Mammary epithelial cell (primary cell): ENCODE measurements at regions of chr6 and their contacts with region 1.

Region 1: GRCh38 chr6:108541838-108542759 is 18.6 kb upstream of the FOXO3 start:
- DNase-seq: peak; percentile 67
- H3K4me3 ChIP-seq: no peak overlapping the region
- H3K27ac ChIP-seq: no peak overlapping the region
- H3K4me1 ChIP-seq: no peaks in the 10 kb centered on the region
- H3K27me3 ChIP-seq: no peaks in the 10 kb centered on the region
- CTCF ChIP-seq: peak; percentile 76 to 85

Region 2: DNA sequence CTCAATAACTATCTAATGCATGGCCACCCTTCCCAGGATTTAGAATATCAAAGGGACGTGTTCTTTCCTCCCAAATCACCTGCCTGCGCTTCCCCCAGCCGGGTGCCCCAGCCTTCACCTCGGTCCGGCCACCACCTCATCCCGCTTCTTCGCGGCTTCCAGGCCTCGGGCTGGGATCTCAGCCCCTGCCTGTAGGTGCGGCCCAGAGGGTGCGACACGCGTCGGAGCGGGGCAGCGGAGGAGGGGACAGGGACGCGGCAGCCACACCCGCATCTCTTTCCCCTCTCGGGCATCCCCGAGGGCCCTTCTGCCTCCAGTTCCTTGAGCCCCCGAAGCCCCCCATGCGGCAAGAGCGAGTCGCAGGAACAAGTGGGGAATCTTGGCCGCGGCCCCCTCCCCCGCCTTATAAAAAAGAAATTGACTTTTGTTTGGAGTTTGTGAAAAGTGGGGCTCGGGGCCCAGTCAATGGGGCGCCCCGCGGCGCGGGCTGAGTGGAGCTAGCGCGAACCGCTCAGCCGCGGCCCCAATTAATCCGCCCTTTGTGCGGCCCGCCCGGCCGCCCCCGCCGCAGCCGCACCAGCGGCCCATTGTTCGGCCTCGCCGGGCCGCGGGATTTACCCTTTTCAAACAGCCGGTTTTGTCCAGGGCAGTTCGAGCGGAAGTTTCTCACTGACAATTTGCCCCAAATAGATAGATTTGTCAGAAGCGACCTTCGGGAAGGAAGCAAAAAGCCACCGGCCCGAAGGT is 384.7 kb before region 1 on chr6:
- CTCF ChIA-PET with region 1: no interaction called
- dilution Hi-C with region 1: no loop called
- in situ Hi-C with region 1: no loop called
- intact Hi-C with region 1: no loop called
- DNase-seq: no peak
- H3K4me3 ChIP-seq: peak overlapping the region in 1 of 3 experiments; percentile 12
- H3K27ac ChIP-seq: no peak overlapping the region
- H3K4me1 ChIP-seq: peaks cover 8% of the 10 kb centered on the region
- H3K27me3 ChIP-seq: peaks cover 36% of the 10 kb centered on the region
- CTCF ChIP-seq: no peak

Region 3: GRCh38 chr6:108564178-108564577 is 22.1 kb after region 1 on chr6:
- CTCF ChIA-PET with region 1: no interaction called
- dilution Hi-C with region 1: no loop called
- in situ Hi-C with region 1: no loop called
- intact Hi-C with region 1: no loop called
- DNase-seq: peak; percentile 93
- H3K4me3 ChIP-seq: peak overlapping the region in 2 of 3 experiments; percentile 10 to 69
- H3K27ac ChIP-seq: peak overlapping the region; percentile 56
- H3K4me1 ChIP-seq: peaks cover 39% of the 10 kb centered on the region
- H3K27me3 ChIP-seq: no peaks in the 10 kb centered on the region
- CTCF ChIP-seq: no peak

Region 4: GRCh38 chr6:108581237-108581931 is 39.3 kb after region 1 on chr6:
- CTCF ChIA-PET with region 1: no interaction called
- dilution Hi-C with region 1: no loop called
- in situ Hi-C with region 1: no loop called
- intact Hi-C with region 1: no loop called
- DNase-seq: peak; percentile 77
- H3K4me3 ChIP-seq: peak overlapping the region in 2 of 3 experiments; percentile 20 to 33
- H3K27ac ChIP-seq: peak overlapping the region; percentile 41
- H3K4me1 ChIP-seq: peaks cover 39% of the 10 kb centered on the region
- H3K27me3 ChIP-seq: no peaks in the 10 kb centered on the region
- CTCF ChIP-seq: no peak

Region 5: DNA sequence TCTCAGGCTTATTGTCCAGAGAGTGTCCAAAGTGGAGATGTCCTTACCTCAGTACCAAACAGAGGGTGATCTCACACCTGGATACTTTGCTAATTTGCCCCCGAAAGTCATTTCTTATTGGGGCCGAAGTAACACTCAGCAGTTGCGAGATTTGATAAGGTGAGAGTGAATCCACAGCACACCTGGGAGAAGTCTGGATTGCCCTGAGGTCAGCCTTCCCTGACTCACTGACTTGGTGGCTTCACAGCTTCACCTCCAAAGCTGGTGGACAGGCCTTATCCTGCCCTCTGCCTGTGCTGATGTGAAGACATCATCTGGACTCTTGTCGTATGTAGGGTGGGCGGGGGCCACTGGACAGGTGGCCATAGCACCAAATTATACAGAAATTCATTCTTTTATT is 204.3 kb after region 1 on chr6:
- CTCF ChIA-PET with region 1: no interaction called
- dilution Hi-C with region 1: no loop called
- in situ Hi-C with region 1: no loop called
- intact Hi-C with region 1: loop called (anchors 1 kb)
- DNase-seq: peak; percentile 88
- H3K4me3 ChIP-seq: no peak overlapping the region
- H3K27ac ChIP-seq: no peak overlapping the region
- H3K4me1 ChIP-seq: peaks cover 21% of the 10 kb centered on the region
- H3K27me3 ChIP-seq: no peaks in the 10 kb centered on the region
- CTCF ChIP-seq: peak; percentile 6 to 47

Region 6: DNA sequence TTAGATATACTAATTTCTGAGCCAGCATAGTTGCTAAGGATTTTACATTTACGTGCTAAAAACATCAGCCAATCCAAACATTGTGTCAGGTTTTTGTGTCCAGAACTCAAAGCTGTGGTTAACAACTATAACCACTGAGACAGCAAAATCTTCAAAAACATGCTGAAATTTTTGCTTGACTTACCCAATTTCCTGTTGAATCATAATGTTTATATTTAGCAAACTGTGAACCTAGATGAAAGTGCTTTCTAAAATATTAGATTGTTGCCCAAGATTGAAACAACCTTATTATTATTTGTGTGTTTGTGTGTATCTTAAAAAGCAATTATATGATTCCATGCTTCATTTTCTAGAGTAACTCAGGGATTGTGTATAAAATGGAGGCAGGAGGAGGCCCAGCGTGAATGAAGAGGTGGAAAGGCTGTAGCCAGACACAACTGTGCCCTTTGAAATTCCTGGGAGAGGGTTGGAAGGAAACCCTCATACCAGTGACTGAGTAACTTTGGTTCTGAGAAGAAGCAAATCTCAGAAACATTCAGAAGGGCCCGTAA is 354.1 kb after region 1 on chr6:
- CTCF ChIA-PET with region 1: interaction called, 7 read pairs
- dilution Hi-C with region 1: no loop called
- in situ Hi-C with region 1: loop called (anchors 5 to 10 kb)
- intact Hi-C with region 1: loop called (anchors 1 kb)
- DNase-seq: peak; percentile 77
- H3K4me3 ChIP-seq: no peak overlapping the region
- H3K27ac ChIP-seq: peak overlapping the region; percentile 69
- H3K4me1 ChIP-seq: peaks cover 22% of the 10 kb centered on the region
- H3K27me3 ChIP-seq: no peaks in the 10 kb centered on the region
- CTCF ChIP-seq: no peak

Region 7: DNA sequence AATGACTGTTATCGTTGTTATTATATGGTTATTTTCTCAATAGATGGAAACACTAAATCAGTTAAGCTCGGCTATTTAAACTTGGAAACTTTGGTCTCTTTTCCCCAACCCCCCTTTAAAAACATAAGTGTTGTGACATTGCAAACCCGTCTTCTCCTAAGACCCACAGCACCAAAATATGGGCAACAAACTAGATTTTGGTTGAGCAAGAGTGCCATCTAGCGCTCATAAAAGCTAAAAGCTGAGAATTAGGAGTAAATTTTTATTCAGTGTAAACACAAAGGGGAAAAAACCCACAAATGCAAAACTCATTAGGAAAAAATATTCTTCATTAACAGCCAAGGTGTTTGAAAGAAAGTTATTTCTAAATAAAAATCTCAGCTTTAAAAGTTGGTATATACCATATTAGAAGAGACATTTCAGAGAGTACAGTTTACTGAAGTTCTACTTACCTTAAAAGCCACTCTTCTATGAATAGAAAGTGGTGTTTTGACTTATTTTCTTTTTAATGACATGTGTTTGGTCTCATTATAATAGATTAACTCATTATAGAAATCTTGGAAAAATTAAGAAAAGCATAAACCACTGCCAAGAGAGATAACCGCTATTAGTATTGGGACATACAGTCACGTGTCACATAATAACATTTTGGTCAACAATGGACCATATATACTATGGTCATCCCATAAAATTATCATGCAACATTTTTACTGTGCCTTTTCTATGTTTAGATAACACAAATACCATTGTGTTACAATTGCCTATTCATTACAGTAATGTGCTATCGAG is 531.4 kb after region 1 on chr6:
- CTCF ChIA-PET with region 1: interaction called, 3 read pairs
- dilution Hi-C with region 1: loop called (anchors 25 kb)
- in situ Hi-C with region 1: loop called (anchors 5 to 10 kb)
- intact Hi-C with region 1: loop called (anchors 1 kb)
- DNase-seq: peak; percentile 53
- H3K4me3 ChIP-seq: no peak overlapping the region
- H3K27ac ChIP-seq: no peak overlapping the region
- H3K4me1 ChIP-seq: peaks cover 3% of the 10 kb centered on the region
- H3K27me3 ChIP-seq: no peaks in the 10 kb centered on the region
- CTCF ChIP-seq: peak; percentile 55 to 65

Region 8: DNA sequence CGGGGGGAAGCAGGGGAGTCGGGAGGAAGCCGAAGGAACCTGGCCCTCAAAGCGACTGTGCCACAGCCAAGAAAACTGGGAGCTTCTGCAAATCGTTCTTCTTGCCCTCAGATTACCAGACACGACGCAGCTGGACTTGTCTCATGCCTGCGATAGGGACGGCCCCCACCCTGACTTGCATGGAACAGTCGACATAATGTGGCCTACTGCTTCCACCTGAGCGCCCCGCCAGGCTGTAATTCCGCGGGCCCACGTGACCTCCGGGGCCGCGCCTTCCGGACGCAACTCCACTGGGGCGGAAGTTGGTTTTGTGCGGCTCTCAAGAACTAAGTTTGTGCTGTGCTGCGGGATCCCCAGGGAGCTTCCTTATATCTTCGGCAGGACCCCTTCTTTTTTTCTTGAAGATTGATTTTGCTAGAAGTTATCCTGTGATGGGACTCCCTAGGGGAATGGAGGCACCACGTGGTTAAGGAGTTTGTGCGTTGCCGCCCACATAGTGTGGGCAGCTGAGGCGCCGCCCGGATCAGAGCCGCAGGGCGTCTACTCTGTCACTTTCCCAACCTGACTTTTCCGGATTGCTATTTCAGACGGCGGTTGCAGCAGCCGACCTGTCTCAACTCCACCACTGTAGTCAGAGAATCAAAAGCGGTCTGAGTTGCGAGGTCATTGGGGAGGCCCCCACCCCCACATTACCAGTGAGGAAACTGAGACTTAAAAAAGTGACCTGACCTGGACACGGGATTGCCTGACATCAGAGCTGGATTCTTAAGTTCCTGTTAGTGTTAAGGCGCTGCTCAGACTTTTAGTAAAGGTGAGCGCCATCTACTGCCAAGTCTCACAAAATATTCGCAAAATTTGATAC is 840.7 kb after region 1 on chr6:
- CTCF ChIA-PET with region 1: interaction called, 3 read pairs
- dilution Hi-C with region 1: no loop called
- in situ Hi-C with region 1: no loop called
- intact Hi-C with region 1: loop called (anchors 5 kb)
- DNase-seq: peak; percentile 93
- H3K4me3 ChIP-seq: peak overlapping the region; percentile 70 to 100 (median 95)
- H3K27ac ChIP-seq: peak overlapping the region; percentile 98
- H3K4me1 ChIP-seq: peaks cover 29% of the 10 kb centered on the region
- H3K27me3 ChIP-seq: no peaks in the 10 kb centered on the region
- CTCF ChIP-seq: peak; percentile 42 to 61